ENCODE measurements at regions of chr7 and their contacts with region 1.

Region 1: GRCh38 chr7:23273141-23273599 is 26.0 kb upstream of the MALSU1 start:
- DNase-seq: peak; percentile 99
- H3K4me3 Mint-ChIP-seq: peak overlapping the region; percentile 42
- H3K27ac Mint-ChIP-seq: peak overlapping the region; percentile 77
- H3K4me1 Mint-ChIP-seq: peaks cover 32% of the 10 kb centered on the region
- H3K27me3 Mint-ChIP-seq: no peaks in the 10 kb centered on the region
- CTCF ChIP-seq: peak; percentile 98

Region 2: DNA sequence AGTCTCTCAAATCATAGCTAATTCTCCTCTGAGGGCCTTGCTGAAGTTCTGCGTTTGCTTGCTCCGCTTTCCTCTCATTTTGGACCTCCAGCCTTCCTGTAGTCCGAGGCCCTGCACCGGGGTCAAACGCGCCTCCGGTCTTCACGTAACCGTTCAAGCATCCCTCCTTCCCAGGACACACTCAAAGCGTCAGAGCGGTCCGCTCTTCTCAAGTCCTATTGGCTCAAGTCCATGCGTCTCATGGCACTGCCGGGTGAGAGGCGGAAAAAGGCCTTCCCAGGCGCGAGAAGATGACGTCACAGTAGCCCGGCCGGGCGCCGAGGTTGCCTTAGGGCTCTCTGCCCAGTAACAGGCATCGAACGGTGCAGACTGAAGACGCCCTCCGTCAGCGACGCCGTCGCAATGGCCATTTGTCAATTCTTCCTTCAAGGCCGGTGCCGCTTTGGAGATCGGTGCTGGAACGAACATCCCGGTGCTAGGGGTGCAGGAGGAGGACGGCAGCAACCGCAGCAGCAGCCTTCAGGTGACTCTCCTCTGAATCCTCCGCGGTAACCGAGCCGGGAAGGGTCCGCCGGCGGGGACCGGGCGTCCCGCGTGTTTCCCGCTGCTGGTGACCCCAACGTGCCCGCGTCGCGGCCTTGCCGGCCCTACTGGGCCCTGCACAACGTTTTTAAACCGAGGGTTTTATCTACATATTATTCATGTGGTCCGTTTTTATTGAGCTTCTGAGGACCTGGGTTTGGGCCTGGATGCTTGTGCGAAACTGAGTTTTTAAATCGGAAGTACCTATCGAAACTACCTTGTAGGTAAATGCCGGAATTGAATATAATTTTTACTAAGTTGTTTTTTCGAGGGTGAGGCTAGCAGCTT is 91.3 kb before region 1 on chr7 and contains the start of gene NUP42:
- CTCF ChIA-PET with region 1: interaction called, 20 read pairs
- intact Hi-C with region 1: no loop called
- DNase-seq: peak; percentile 99
- H3K4me3 Mint-ChIP-seq: peak within 1 kb of the TSS; percentile 81
- H3K27ac Mint-ChIP-seq: peak within 1 kb of the TSS; percentile 90
- H3K4me1 Mint-ChIP-seq: peaks cover 26% of the 10 kb centered on the region
- H3K27me3 Mint-ChIP-seq: no peaks in the 10 kb centered on the region
- CTCF ChIP-seq: no peak
- total RNA-seq, gene NUP42: 62.8 TPM in 2 replicates

Region 3: GRCh38 chr7:23298885-23299769 is 26.0 kb after region 1 on chr7 and contains the start of gene MALSU1:
- CTCF ChIA-PET with region 1: interaction called, 22 read pairs
- intact Hi-C with region 1: loop called (anchors 1 kb)
- DNase-seq: peak; percentile 99
- H3K4me3 Mint-ChIP-seq: peak within 1 kb of the TSS; percentile 94
- H3K27ac Mint-ChIP-seq: peak within 1 kb of the TSS; percentile 84
- H3K4me1 Mint-ChIP-seq: peaks cover 59% of the 10 kb centered on the region
- H3K27me3 Mint-ChIP-seq: no peaks in the 10 kb centered on the region
- CTCF ChIP-seq: no peak
- total RNA-seq, gene MALSU1: 108 and 114 TPM in 2 replicates

Region 4: DNA sequence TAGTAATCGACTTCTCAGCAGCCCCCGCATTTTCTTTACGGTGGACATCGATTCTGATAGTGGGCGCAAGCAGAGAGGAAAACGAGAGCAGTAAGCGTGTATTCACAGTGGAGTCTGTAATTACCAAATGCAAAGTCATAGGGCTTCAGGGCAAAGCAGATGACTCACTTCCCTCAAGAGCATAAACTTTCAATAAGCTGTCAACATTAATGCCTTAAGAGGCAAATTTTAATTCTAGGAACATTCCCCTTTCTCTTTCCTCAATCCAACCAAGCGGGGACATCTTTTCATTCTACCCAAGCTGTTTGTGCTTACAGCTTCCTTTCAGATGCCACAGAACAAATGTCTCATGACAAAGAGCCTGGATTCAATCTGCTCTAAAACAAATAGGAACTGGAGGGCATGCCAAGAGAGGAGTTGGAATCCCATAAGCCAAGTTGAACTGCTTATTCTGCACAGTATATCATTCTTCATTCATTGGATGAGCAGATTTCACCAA is 74.6 kb after region 1 on chr7:
- CTCF ChIA-PET with region 1: interaction called, 10 read pairs
- intact Hi-C with region 1: no loop called
- DNase-seq: peak; percentile 34
- H3K4me3 Mint-ChIP-seq: no peak overlapping the region
- H3K27ac Mint-ChIP-seq: peak overlapping the region; percentile 38
- H3K4me1 Mint-ChIP-seq: peaks cover 46% of the 10 kb centered on the region
- H3K27me3 Mint-ChIP-seq: no peaks in the 10 kb centered on the region
- CTCF ChIP-seq: no peak

Region 5: DNA sequence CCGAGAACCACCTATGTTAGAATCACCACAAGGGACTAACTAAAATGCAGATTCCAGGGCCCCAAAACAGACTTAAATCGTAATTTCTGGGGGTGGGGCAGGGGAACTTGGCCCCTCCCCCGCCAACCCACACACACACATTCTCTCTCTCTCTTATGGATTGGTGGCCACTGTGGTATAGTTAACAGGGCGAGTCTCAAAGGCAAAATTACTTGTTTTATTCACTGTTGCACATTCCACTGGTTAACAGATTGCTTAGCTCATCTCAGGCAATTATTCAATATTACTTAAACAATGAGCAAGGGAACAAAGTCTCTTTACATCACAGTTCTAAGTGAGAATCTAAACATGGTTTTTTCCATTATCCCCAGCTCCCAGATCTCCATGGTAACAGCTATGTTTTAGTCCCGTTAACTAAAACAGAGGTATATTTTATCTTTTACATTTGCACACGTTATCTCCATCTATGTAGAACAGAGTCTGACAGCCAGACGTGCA is 158.6 kb after region 1 on chr7:
- CTCF ChIA-PET with region 1: interaction called, 9 read pairs
- intact Hi-C with region 1: loop called (anchors 10 kb)
- DNase-seq: peak; percentile 24
- H3K4me3 Mint-ChIP-seq: peak overlapping the region; percentile 5
- H3K27ac Mint-ChIP-seq: peak overlapping the region; percentile 88
- H3K4me1 Mint-ChIP-seq: peaks cover 59% of the 10 kb centered on the region
- H3K27me3 Mint-ChIP-seq: no peaks in the 10 kb centered on the region
- CTCF ChIP-seq: no peak

Region 6: DNA sequence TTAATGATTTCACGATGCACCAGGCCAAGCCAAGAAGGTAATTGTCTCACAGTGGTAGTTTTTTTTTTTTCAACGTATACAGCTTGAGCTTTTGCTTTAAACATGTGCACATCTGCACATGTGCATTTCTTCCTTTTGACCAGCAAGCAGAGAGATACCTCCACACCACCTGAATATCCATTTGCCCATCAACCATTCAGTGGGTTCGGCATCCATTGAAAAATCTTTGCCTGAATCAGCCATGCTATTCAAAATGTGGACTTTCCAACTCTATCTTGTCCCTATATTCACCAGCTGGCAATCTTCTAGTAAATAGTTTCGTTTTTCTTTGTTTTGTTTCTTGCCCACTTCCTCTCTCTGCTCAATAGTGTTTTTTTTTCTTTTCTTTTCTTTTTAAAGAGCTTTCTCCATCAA is 266.3 kb after region 1 on chr7:
- CTCF ChIA-PET with region 1: interaction called, 46 read pairs
- intact Hi-C with region 1: no loop called
- DNase-seq: no peak
- H3K4me3 Mint-ChIP-seq: no peak overlapping the region
- H3K27ac Mint-ChIP-seq: no peak overlapping the region
- H3K4me1 Mint-ChIP-seq: peaks cover 17% of the 10 kb centered on the region
- H3K27me3 Mint-ChIP-seq: no peaks in the 10 kb centered on the region
- CTCF ChIP-seq: no peak

Region 7: GRCh38 chr7:23712368-23713284 is 439.5 kb after region 1 on chr7:
- CTCF ChIA-PET with region 1: interaction called, 5 read pairs
- intact Hi-C with region 1: loop called (anchors 2 kb)
- DNase-seq: no peak
- H3K4me3 Mint-ChIP-seq: peak overlapping the region; percentile 2
- H3K27ac Mint-ChIP-seq: peak overlapping the region; percentile 35
- H3K4me1 Mint-ChIP-seq: peaks cover 56% of the 10 kb centered on the region
- H3K27me3 Mint-ChIP-seq: no peaks in the 10 kb centered on the region
- CTCF ChIP-seq: peak; percentile 71

Measured in Calu3 (cell line).